Caco-2 (cell line): ENCODE measurements at regions of chr2 and their contacts with region 1.

Region 1: GRCh38 chr2:225425284-225425683 is 25.8 kb downstream of the NYAP2 start:
- DNase-seq: no peak
- H3K4me3 ChIP-seq: no peak overlapping the region
- H3K4me3 Mint-ChIP-seq: no peak overlapping the region
- H3K27ac Mint-ChIP-seq: no peak overlapping the region
- H3K4me1 ChIP-seq: no peaks in the 10 kb centered on the region
- H3K4me1 Mint-ChIP-seq: no peaks in the 10 kb centered on the region
- H3K27me3 ChIP-seq: no peaks in the 10 kb centered on the region
- H3K27me3 Mint-ChIP-seq: peaks cover 9% of the 10 kb centered on the region
- CTCF ChIP-seq: no peak

Region 2: DNA sequence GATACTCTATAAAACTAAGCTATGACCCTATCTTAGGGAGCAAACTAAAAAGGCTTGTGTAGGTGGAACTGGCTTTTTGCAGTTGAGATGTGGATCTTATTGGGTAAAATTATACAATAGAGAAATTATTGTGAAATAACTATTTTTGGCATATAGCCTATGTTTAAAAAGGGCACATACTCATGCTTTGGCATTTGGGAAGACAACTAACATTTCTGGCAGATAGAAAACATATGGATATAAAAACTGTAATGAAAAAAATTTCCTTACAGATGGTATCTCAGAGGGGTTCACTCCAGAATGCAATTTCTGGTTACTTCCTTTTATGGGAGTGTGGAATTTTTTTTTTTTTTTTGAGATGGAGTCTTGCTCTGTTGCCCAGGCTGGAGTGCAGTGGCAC is 589.0 kb before region 1 on chr2:
- CTCF ChIA-PET with region 1: no interaction called
- POLR2A ChIA-PET with region 1: no interaction called
- intact Hi-C with region 1: no loop called
- DNase-seq: no peak
- H3K4me3 ChIP-seq: no peak overlapping the region
- H3K4me3 Mint-ChIP-seq: no peak overlapping the region
- H3K27ac Mint-ChIP-seq: no peak overlapping the region
- H3K4me1 ChIP-seq: no peaks in the 10 kb centered on the region
- H3K4me1 Mint-ChIP-seq: no peaks in the 10 kb centered on the region
- H3K27me3 ChIP-seq: no peaks in the 10 kb centered on the region
- H3K27me3 Mint-ChIP-seq: peaks cover 5% of the 10 kb centered on the region
- CTCF ChIP-seq: no peak

Region 3: DNA sequence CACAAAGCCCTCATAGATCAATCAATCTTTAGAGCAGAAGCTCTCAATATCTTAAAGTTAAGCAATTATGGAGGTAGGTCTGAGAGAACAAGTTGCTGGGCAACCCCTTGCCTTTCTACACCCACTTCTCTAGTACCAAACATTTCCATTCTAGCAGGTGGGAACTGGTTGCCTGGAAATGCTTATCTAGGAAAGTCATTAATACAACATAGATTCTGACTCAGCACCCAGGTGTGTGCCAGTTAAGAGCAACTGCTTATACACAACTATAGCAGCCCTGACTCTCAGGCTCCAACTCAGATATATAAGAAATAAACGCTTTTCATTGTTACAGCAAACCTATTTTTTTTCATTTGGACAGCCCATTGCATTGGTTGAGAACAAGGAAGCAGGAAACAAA is 1136.7 kb after region 1 on chr2:
- CTCF ChIA-PET with region 1: no interaction called
- POLR2A ChIA-PET with region 1: interaction called, 11 read pairs
- intact Hi-C with region 1: no loop called
- DNase-seq: no peak
- H3K4me3 ChIP-seq: no peak overlapping the region
- H3K4me3 Mint-ChIP-seq: no peak overlapping the region
- H3K27ac Mint-ChIP-seq: no peak overlapping the region
- H3K4me1 ChIP-seq: no peaks in the 10 kb centered on the region
- H3K4me1 Mint-ChIP-seq: peaks cover 14% of the 10 kb centered on the region
- H3K27me3 ChIP-seq: no peaks in the 10 kb centered on the region
- H3K27me3 Mint-ChIP-seq: no peaks in the 10 kb centered on the region
- CTCF ChIP-seq: no peak